ENCODE measurements at regions of chr9 and their contacts with region 1.

Region 1: DNA sequence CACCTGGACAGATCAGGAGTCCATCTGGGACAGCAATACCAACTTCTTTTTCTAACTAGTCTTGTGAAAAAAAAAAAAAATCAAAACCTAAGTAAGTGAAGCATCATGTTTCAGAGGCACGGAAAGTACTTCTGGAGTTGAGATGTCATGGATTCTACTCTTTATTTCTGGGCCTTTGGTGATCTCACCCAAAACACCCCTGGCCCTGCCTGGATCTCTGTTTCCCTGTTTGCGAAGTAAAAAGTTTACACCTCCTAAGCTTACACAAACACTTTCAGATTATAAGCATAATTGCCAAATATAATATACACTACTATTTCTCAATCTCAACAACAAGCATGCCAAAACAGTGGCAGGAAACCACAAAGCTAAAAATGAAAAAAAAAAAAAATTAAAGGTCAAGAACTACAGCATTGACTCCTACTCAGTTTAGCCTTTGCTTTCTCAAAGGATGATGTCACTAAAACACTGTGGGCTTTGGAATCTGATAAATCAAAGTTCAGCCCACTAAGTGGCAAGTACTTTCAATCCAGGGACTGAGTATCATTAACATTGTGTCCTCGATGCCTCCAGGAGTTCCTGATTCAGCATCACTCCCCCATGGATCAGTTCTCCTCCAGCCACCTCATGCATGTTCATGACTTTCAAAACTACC is 291.9 kb downstream of the NFIB start:
- DNase-seq: no peak
- ATAC-seq: no peak

Region 2: DNA sequence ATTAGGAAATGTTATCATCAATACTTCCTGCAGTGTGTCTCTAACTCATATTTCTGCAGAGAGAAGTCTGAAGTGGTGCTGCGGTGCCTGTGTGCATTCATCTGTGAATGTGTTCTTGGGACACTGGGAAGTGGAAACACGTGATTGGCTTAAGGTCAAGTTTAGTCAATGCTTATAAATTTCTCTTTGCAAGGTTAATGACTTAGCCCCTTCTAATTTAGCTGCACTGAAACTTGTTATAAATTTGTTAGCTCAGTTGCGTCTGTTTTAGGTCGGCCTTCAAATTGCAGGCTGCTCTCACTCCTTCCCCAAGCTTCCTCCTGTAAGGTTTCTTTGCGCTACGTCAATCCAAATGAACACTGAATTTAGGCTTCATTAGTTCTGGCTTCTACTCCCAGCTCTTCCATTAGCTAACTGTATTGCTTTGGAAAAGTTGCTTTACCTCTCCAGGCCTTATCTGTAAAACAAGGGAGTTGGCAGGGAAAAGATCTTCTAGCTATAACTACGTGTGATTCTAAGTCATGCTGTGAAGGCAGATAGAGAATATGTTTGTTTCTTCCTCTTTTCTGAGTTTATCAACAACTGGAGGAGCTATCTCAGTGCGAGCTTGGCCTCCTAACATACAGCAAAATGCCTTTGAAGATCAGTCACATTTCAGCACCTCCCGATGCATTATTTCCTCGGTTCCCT is 49.9 kb before region 1 on chr9:
- intact Hi-C with region 1: loop called in 1 of 2 experiments (anchors 5 kb)
- DNase-seq: no peak
- ATAC-seq: peak; percentile 15 to 69

Region 3: GRCh38 chr9:14180093-14180959 is 158.3 kb after region 1 on chr9:
- intact Hi-C with region 1: no loop called
- DNase-seq: peak; percentile 37
- ATAC-seq: peak; percentile 55 to 69